GM12878 (cell line): ENCODE measurements at regions of chr2 and their contacts with region 1.

Region 1: GRCh38 chr2:17479875-17480274 is 38.4 kb downstream of the RAD51AP2 start:
- DNase-seq: no peak
- ATAC-seq: no peak
- H3K4me3 ChIP-seq: no peak overlapping the region
- H3K27ac ChIP-seq: no peak overlapping the region
- H3K4me1 ChIP-seq: no peaks in the 10 kb centered on the region
- H3K27me3 ChIP-seq: no peaks in the 10 kb centered on the region; a peak in 1 of 4 replicates
- CTCF ChIP-seq: no peak
- EP300 ChIP-seq: no peak
- POLR2A ChIP-seq: no peak
- RAD21 ChIP-seq: no peak

Region 2: GRCh38 chr2:17573085-17573803 is 93.4 kb after region 1 on chr2:
- CTCF ChIA-PET with region 1: interaction called, 6 read pairs
- POLR2A ChIA-PET with region 1: no interaction called
- RAD21 ChIA-PET with region 1: no interaction called
- SMC1A ChIA-PET with region 1: interaction called, 3 read pairs
- in situ Hi-C with region 1: no loop called
- intact Hi-C with region 1: loop called (anchors 5 kb)
- DNase-seq: no peak
- ATAC-seq: peak; percentile 39; the same call in 1 of the 3 replicates
- H3K4me3 ChIP-seq: no peak overlapping the region
- H3K27ac ChIP-seq: no peak overlapping the region
- H3K4me1 ChIP-seq: 0 out of 2 replicates have a peak, but pooled peaks cover 2% of the 10 kb centered on the region
- H3K27me3 ChIP-seq: no peaks in the 10 kb centered on the region; a peak in 1 of 4 replicates
- CTCF ChIP-seq: peak in 1 of 3 experiments; percentile 40; a peak in 2 of 6 replicates
- EP300 ChIP-seq: no peak
- POLR2A ChIP-seq: no peak
- RAD21 ChIP-seq: peak; percentile 54; the same call in 1 of the 2 replicates